Left ventricle myocardium superior (tissue), 1 donor: ENCODE measurements at regions of chr12 and their contacts with region 1.

Region 1: DNA sequence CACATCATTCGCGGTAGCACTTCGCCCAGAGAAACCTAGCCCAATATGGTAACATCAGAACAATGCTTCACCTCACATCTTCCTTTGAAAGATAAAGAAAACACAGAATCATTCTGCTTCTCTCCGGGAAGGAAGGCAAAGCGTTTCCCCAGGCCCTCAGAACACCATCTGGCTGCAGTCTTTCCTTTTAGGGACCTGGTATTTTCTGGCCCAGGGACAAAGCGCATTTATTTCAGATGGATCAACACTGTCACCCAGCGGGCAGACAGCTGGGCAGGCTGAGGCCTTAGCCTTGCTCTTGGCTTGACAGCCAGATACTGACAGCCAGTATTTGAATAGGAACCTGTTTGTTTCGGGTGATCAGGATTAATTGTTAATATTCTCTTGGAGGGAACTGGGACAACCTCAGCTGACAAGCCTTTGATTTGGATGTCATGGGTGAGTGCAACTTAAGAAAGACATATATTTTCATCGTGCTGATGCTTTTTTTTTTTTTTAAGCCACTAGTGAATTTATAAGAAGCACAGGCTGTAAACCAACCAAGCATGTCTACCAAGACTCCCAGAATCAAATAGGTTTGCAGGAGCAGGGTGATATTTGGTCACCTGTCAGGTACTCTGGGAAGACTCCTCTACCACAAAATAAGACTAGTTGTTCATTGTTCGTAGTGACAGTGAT is 118.9 kb downstream of the VEZT start:
- DNase-seq: peak; percentile 68
- ATAC-seq: peak; percentile 89

Region 2: DNA sequence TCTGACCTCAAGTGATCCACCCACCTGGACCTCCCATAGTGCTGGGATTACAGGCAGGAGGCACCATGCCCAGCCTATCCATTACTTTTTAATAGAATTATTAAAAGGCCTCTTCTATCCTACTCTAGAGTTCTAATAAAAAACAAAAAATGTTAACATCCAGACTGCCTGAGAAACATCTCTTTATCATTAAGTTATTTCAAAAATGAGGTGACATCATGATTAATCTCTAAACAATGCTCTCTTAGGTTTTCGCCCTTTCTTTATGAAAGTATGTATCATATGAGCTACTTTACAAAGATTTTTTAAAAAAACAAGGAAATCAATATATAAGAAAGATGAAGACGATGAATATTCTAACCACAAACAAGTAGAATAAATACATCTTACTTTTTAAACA is 171.9 kb before region 1 on chr12:
- intact Hi-C with region 1: no loop called
- DNase-seq: no peak
- ATAC-seq: no peak

Region 3: DNA sequence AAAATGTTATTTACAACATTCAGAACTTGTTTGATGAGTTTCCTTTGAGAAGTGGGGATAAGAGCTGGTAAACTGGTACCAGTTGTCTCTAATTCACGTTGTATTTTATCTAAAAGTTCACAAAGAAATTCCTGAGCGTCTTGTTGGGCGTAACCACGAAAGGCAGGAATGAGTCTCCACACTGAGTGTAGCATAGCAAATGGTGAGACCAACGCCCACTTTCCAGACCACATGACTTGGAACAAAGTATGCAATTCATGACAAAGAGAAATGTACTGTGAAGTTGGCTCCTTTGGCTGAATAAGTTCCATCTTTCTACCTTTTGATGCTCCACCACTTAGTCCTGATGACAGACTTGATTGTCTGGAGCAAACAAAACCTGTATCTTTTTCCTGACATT is 196.3 kb after region 1 on chr12:
- intact Hi-C with region 1: loop called (anchors 10 kb)
- DNase-seq: no peak
- ATAC-seq: no peak